GM12878 (cell line): ENCODE measurements at regions of chr15 and their contacts with region 1.

Region 1: DNA sequence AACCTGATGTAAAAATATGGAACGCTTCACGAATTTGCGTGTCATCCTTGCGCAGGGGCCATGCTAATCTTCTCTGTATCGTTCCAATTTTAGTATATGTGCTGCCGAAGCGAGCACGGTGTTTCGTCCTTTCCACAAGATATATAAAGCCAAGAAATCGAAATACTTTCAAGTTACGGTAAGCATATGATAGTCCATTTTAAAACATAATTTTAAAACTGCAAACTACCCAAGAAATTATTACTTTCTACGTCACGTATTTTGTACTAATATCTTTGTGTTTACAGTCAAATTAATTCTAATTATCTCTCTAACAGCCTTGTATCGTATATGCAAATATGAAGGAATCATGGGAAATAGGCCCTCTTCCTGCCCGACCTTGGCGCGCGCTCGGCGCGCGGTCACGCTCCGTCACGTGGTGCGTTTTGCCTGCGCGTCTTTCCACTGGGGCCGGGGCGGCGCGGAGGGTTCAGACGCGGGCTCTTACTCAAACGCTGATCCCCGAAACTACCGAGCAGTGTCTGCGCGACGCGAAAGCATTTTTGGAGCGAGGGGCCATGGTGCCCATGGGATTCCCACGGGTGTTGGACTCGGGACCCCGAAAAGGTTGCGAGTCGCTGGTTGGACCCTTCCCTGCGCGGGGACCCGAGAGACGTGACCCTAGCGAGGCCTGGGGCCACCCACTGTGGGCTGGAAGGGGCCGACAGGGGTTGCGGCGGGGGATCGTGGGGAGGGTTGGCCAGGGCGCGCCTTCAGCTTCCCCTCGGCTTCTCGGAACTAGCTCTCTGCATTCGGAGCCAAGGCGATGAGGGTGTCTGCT is at the start of gene RNU6-1:
- DNase-seq: peak; percentile 88
- ATAC-seq: peak; percentile 86
- H3K4me3 ChIP-seq: peak within 1 kb of the TSS; percentile 85
- H3K27ac ChIP-seq: peak within 1 kb of the TSS; percentile 83
- H3K4me1 ChIP-seq: peaks cover 23% of the 10 kb centered on the region
- H3K27me3 ChIP-seq: peaks cover 8% of the 10 kb centered on the region in 2 experiments; a peak in 3 of 4 replicates
- CTCF ChIP-seq: no peak
- EP300 ChIP-seq: 0 out of 4 replicates have a peak, but pooled peaks have one; percentile 24
- POLR2A ChIP-seq: peak; percentile 94
- RAD21 ChIP-seq: 0 out of 2 replicates have a peak, but pooled peaks have one; percentile 3
- polyA plus RNA-seq, gene RNU6-1: not detected

Region 2: GRCh38 chr15:67456677-67457529 is 383.2 kb before region 1 on chr15:
- CTCF ChIA-PET with region 1: interaction called, 111 read pairs
- POLR2A ChIA-PET with region 1: interaction called, 3 read pairs
- RAD21 ChIA-PET with region 1: interaction called, 12 read pairs
- SMC1A ChIA-PET with region 1: interaction called, 51 read pairs
- in situ Hi-C with region 1: loop called (anchors 5 kb)
- intact Hi-C with region 1: loop called (anchors 1 kb)
- DNase-seq: peak; percentile 23
- ATAC-seq: peak; percentile 99
- H3K4me3 ChIP-seq: no peak overlapping the region
- H3K27ac ChIP-seq: no peak overlapping the region
- H3K4me1 ChIP-seq: no peaks in the 10 kb centered on the region
- H3K27me3 ChIP-seq: no peaks in the 10 kb centered on the region
- CTCF ChIP-seq: peak; percentile 94 to 96 (median 95); a peak in 5 of 6 replicates
- EP300 ChIP-seq: no peak
- POLR2A ChIP-seq: no peak
- RAD21 ChIP-seq: peak; percentile 86

Region 3: DNA sequence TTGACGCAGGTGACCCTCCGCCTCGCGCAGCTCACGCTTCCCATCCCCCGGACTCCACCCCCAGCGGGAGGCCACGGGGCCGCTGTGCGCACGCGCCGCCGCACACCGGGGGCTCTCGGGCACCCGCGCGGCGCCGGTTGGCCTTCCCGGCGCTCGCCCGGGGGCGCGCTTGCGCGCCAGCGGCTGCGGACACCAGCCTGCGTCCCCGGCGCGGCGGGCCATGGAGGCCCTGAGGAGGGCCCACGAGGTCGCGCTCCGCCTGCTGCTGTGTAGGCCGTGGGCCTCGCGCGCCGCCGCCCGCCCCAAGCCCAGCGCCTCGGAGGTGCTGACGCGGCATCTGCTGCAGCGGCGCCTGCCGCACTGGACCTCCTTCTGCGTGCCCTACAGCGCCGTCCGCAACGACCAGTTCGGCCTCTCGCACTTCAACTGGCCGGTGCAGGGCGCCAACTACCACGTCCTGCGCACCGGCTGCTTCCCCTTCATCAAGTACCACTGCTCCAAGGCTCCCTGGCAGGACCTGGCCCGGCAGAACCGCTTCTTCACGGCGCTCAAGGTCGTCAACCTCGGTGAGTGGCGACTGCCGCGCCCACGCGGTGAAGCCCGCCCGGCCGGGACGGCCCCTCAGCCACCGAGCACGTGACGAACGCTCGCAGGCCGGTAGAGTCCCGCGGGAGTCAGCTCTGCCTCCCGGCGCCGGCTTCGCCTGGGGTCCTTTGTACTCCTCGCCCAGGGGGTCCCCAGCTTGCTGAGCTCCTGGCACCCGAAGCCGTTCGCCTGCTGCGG is 318.9 kb before region 1 on chr15 and contains the start of gene C15orf61:
- CTCF ChIA-PET with region 1: interaction called, 5 read pairs
- POLR2A ChIA-PET with region 1: interaction called, 6 read pairs
- RAD21 ChIA-PET with region 1: no interaction called
- SMC1A ChIA-PET with region 1: no interaction called
- in situ Hi-C with region 1: no loop called
- intact Hi-C with region 1: loop called (anchors 5 kb)
- DNase-seq: peak; percentile 76
- ATAC-seq: peak; percentile 84
- H3K4me3 ChIP-seq: peak within 1 kb of the TSS; percentile 93
- H3K27ac ChIP-seq: peak within 1 kb of the TSS; percentile 62
- H3K4me1 ChIP-seq: no peaks in the 10 kb centered on the region
- H3K27me3 ChIP-seq: no peaks in the 10 kb centered on the region
- CTCF ChIP-seq: peak in 2 of 3 experiments; percentile 0 to 7; a peak in 1 of 6 replicates
- EP300 ChIP-seq: 0 out of 4 replicates have a peak, but pooled peaks of 1 of the 2 experiments have one; percentile 10
- POLR2A ChIP-seq: peak; percentile 88
- RAD21 ChIP-seq: no peak
- polyA plus RNA-seq, gene C15orf61: 1.4 to 4.5 TPM

Region 4: DNA sequence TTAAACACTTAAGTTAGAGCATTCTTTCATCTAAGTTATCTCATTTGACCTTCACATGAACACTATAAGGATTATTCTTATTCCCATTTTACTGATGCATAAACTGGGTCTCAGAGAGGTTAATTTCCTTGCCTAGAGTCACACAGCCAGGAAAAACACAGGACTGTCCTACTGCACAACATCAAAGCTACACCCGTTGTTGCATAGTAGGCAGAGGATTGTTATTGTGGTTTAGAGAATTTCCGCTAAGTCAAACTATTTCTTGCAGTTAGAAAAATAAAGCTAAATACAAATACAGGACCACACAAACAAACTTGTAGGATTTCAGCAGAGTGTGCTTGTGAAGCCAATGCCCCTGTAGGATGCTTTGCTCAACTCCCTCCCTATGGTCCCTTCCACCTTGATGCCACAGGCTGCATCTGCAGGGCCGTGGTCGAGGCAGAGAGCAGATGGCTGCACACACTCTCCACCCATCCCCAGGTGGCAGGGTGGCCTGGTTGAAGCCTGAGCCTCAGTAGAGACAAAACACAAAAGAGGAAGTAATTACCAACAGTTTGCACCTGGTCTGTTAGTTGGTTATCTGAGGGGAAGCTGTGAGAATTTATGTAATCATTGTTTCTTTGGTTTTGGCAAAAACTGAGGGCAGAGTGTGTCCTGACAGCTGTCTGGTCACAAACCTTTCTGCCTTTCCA is 55.9 kb before region 1 on chr15:
- CTCF ChIA-PET with region 1: interaction called, 52 read pairs
- POLR2A ChIA-PET with region 1: interaction called, 4 read pairs
- RAD21 ChIA-PET with region 1: interaction called, 22 read pairs
- SMC1A ChIA-PET with region 1: interaction called, 50 read pairs
- in situ Hi-C with region 1: no loop called
- intact Hi-C with region 1: no loop called
- DNase-seq: peak; percentile 82
- ATAC-seq: peak; percentile 94
- H3K4me3 ChIP-seq: no peak overlapping the region
- H3K27ac ChIP-seq: peak overlapping the region; percentile 63
- H3K4me1 ChIP-seq: peaks cover 33% of the 10 kb centered on the region
- H3K27me3 ChIP-seq: no peaks in the 10 kb centered on the region
- CTCF ChIP-seq: 0 out of 6 replicates have a peak, but pooled peaks of 1 of the 3 experiments have one; percentile 9
- EP300 ChIP-seq: peak; percentile 73 to 88
- POLR2A ChIP-seq: no peak
- RAD21 ChIP-seq: no peak

Region 5: GRCh38 chr15:68080783-68081182 is 240.6 kb after region 1 on chr15:
- CTCF ChIA-PET with region 1: no interaction called
- POLR2A ChIA-PET with region 1: interaction called, 12 read pairs
- RAD21 ChIA-PET with region 1: no interaction called
- SMC1A ChIA-PET with region 1: no interaction called
- in situ Hi-C with region 1: no loop called
- intact Hi-C with region 1: no loop called
- DNase-seq: no peak
- ATAC-seq: peak; percentile 53
- H3K4me3 ChIP-seq: no peak overlapping the region
- H3K27ac ChIP-seq: no peak overlapping the region
- H3K4me1 ChIP-seq: peaks cover 15% of the 10 kb centered on the region
- H3K27me3 ChIP-seq: no peaks in the 10 kb centered on the region
- CTCF ChIP-seq: no peak
- EP300 ChIP-seq: no peak
- POLR2A ChIP-seq: no peak
- RAD21 ChIP-seq: no peak